OCI-LY7 (cell line): ENCODE measurements at regions of chr13 and their contacts with region 1.

Region 1: DNA sequence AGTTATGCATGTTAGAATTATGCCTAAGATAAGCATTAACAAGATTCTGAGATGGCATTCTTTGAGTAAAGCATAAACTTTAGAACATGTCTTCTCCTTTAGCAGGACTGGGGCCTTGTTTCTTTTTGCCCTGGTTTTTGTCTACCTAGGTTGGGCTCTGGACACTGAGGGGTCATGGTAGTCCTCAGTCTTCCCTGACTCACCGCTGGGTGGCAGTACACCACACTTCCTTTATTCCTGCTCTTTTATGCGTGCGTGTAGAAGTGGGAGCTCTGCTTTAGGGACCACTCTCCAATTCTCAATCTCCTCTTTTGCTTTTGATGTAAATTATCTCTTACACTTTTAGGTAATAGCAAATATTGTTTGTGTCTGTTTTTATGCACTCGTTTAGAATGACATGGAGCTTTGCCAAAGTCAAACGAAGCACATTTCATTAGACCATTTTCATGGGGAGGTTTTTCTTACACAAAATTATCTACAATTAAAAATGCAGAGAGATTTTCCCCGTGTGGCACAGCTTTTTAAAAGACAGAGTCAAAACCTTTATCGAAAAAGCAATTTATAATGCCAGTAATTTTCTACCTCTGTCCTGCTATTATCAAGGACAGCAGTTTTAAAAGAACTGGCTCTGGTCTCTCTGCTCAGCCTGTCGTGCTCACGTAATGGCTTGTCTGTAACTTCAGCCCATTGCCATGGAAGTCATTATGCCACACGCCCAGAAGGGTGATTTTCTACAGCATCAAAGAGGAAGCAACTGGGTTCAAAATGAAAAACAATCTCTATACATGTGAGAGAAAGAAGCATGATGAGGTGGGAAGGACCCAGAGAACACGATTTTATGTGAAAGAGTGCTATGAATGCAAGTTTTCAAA is 413.9 kb downstream of the COG6 start:
- DNase-seq: peak; percentile 81
- H3K4me3 ChIP-seq: no peak overlapping the region
- H3K27ac ChIP-seq: no peak overlapping the region
- H3K4me1 ChIP-seq: peaks cover 24% of the 10 kb centered on the region
- CTCF ChIP-seq: peak; percentile 98

Region 2: GRCh38 chr13:40082639-40083038 is 13.2 kb after region 1 on chr13:
- CTCF ChIA-PET with region 1: no interaction called
- POLR2A ChIA-PET with region 1: no interaction called
- intact Hi-C with region 1: no loop called
- DNase-seq: no peak
- H3K4me3 ChIP-seq: no peak overlapping the region
- H3K27ac ChIP-seq: no peak overlapping the region
- H3K4me1 ChIP-seq: no peaks in the 10 kb centered on the region
- CTCF ChIP-seq: 0 out of 2 replicates have a peak, but pooled peaks have one; percentile 23

Region 3: DNA sequence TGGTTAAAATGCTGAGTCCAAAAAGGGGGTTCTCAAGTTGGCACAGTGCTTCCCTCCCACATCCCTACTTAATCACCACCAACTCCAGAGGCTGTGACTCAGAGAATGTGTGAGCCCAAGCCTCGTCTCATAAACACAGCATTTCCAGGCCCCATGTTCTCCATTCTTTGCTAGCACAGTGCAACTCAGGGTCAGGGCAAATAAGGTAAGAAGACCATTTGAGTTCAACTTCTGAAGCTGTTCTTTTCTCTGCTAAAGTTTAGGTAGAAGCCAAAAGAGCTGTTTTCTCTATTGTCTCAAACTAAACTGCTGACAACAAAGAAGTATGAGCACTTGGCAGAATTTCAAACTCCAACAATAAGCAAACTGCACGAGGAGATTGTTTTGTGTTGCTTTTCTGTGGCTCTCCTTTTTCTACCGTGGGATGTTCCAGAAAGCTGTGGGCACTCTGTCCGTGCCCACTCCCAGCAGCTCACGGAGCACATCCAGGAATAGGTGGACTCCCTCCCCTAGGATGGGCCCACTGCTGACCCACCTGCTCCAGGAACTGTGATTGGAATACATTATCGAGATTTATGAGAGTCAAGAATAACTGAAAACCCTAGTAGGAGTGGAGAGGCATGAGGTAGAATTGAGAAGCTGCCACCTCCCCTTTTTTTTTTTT is 80.3 kb after region 1 on chr13:
- CTCF ChIA-PET with region 1: no interaction called
- POLR2A ChIA-PET with region 1: no interaction called
- intact Hi-C with region 1: loop called (anchors 5 kb)
- DNase-seq: no peak
- H3K4me3 ChIP-seq: no peak overlapping the region
- H3K27ac ChIP-seq: no peak overlapping the region
- H3K4me1 ChIP-seq: peaks cover 39% of the 10 kb centered on the region
- CTCF ChIP-seq: no peak